ENCODE measurements at regions of chr2 and their contacts with region 1.

Region 1: DNA sequence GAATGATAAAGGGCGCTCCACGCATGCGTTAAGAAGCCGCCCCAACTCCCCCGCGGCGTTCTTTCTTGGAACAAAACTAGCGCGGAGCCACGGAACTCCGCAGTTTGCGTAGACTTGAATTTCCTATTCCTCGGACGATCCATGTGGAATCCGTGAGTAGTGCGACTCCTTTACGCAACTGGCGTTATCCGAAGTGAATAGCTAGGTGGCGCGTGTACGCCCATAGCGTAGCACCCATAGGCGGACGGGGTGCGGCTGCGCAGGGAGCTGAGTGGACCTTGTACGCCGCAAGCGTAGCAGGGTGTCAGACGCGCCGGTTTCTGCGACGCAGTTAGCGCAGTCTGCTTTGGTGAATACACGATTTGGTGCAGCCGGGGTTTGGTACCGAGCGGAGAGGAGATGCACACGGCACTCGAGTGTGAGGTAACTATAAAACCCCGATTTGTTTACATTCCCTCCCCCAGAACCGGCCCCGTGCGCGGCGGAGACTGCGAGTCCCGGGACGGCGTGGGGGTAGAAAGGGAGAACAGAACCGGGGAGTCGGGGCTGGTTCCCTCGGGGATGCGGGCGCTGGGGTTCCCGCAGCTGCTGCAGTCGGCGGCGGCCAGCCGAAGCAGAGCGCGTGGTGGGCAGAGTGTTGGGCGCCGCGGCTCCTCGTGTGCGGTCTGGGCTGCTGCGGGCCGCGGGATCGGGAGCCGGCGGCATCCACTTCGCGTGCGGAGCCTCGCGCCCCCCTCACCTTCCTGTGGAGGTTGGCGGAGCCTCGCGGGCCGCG is at the start of gene SLC39A10:
- DNase-seq: peak; percentile 97 to 99 (median 98)
- ATAC-seq: peak; percentile 94 to 95
- H3K4me3 ChIP-seq: peak within 1 kb of the TSS; percentile 92
- H3K27ac ChIP-seq: peak within 1 kb of the TSS; percentile 86
- H3K4me1 ChIP-seq: no peaks in the 10 kb centered on the region
- H3K27me3 ChIP-seq: no peaks in the 10 kb centered on the region
- total RNA-seq, gene SLC39A10: 13.3 to 17.9 (median 14.5) TPM

Region 2: GRCh38 chr2:195575879-195576401 is 81.1 kb before region 1 on chr2:
- intact Hi-C with region 1: loop called in 3 of 4 experiments (anchors 5 to 10 kb)
- DNase-seq: no peak
- ATAC-seq: peak; percentile 32 to 40
- H3K4me3 ChIP-seq: no peak overlapping the region
- H3K27ac ChIP-seq: no peak overlapping the region
- H3K4me1 ChIP-seq: no peaks in the 10 kb centered on the region
- H3K27me3 ChIP-seq: no peaks in the 10 kb centered on the region

Region 3: GRCh38 chr2:195622956-195623355 is 34.1 kb before region 1 on chr2:
- intact Hi-C with region 1: no loop called
- DNase-seq: no peak
- ATAC-seq: no peak
- H3K4me3 ChIP-seq: no peak overlapping the region
- H3K27ac ChIP-seq: no peak overlapping the region
- H3K4me1 ChIP-seq: no peaks in the 10 kb centered on the region
- H3K27me3 ChIP-seq: no peaks in the 10 kb centered on the region

Region 4: GRCh38 chr2:196068271-196069209 is 411.5 kb after region 1 on chr2 and contains the start of gene DNAH7:
- intact Hi-C with region 1: loop called in 1 of 4 experiments (anchors 5 kb)
- DNase-seq: peak; percentile 92 to 97 (median 95)
- ATAC-seq: peak; percentile 98 to 99
- H3K4me3 ChIP-seq: peak within 1 kb of the TSS; percentile 62
- H3K27ac ChIP-seq: peak within 1 kb of the TSS; percentile 1
- H3K4me1 ChIP-seq: no peaks in the 10 kb centered on the region
- H3K27me3 ChIP-seq: no peaks in the 10 kb centered on the region
- total RNA-seq, gene DNAH7: 0.35 to 0.77 (median 0.57) TPM

Measured in right cardiac atrium (tissue), 5 donors.